ENCODE measurements at regions of chr7 and their contacts with region 1.

Region 1: DNA sequence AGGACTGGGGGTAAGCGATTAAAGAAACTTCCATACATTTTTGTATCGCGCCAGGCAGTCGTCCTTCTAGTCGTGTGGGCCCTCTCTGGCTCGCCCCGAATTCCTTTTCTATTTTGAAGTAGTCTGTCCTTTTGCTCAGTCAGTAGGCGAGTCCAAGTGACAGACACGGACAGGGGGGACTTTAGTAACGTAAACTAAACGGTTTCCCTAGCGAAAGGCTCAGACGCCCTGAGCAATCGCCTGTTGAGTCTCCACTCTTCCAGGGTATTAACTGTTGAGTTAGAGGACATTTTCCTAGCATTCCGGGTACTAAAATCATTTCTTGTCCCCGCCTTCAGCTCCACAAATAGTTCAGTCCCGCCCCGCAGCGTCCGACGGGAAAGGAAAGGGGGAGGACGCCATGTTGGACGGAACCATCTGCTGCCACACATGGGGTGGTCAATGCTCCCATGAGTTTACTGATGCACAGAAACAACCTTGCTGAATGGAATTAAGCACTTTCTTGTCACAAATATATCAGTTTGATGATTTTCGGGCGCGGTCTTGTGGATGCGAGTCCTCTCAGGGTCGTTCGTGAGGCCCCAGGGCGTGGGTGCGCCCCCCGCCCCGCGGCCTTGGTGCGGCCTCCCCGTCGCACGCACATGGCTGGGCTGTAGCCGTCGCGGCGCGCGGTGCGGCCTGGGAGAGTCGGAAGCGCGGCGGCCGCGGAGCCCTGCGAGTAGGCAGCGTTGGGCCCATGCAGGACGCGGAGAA is at the start of gene EIF3B:
- DNase-seq: peak; percentile 85
- H3K4me3 Mint-ChIP-seq: peak within 1 kb of the TSS; percentile 92
- H3K27ac Mint-ChIP-seq: peak within 1 kb of the TSS; percentile 100
- H3K4me1 Mint-ChIP-seq: peaks cover 21% of the 10 kb centered on the region
- H3K27me3 Mint-ChIP-seq: no peaks in the 10 kb centered on the region
- total RNA-seq, gene EIF3B: 269 and 270 TPM in 2 replicates

Region 2: DNA sequence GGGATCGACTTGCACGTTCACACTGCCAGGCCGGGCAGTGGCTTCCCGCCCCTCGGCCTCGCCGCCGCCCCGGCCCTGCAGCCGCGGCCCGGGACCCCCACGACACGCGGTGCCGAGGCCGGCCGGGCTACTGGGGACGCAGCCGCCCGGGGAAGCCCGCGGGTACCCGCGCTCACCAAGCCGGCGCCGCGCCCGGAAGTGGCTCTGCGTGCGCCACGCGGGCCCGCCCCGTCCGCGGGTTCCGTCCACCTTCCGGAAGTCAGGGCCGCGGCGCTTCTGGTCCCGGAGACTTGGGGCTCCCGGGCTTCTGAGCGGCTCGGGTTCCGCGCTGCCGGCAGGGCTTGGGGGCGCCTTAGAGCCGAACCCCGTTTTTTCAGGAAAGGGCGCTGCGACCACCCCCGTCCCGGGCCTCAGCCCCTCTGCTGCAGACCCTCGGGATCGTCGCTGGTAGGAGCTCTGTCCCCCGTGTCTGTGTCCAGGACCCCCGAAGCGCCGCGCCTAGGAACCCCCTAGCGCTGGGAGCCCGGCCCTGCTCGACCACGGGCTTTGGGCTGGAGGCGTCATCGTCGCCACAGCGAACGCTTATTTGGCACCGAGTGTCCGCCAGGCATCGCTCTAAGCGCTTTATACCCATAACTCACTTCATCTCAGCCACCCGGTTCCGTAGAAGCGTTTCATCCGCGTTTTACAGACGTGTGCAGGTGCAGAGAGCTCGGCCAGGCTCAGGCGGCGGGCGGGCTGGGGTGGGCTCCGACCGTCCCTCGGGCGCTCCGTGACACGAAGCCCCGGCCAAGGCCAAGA is 784.3 kb before region 1 on chr7 and contains the start of gene PSMG3:
- intact Hi-C with region 1: loop called (anchors 1 kb)
- DNase-seq: peak; percentile 86
- H3K4me3 Mint-ChIP-seq: peak within 1 kb of the TSS; percentile 89
- H3K27ac Mint-ChIP-seq: peak within 1 kb of the TSS; percentile 81
- H3K4me1 Mint-ChIP-seq: peaks cover 31% of the 10 kb centered on the region
- H3K27me3 Mint-ChIP-seq: no peaks in the 10 kb centered on the region
- total RNA-seq, gene PSMG3: 55.7 and 56.0 TPM in 2 replicates

Region 3: GRCh38 chr7:1940402-1940786 is 414.0 kb before region 1 on chr7:
- intact Hi-C with region 1: loop called (anchors 10 kb)
- DNase-seq: peak; percentile 90
- H3K4me3 Mint-ChIP-seq: peak overlapping the region; percentile 84
- H3K27ac Mint-ChIP-seq: peak overlapping the region; percentile 87
- H3K4me1 Mint-ChIP-seq: peaks cover 55% of the 10 kb centered on the region
- H3K27me3 Mint-ChIP-seq: peaks cover 2% of the 10 kb centered on the region

Region 4: DNA sequence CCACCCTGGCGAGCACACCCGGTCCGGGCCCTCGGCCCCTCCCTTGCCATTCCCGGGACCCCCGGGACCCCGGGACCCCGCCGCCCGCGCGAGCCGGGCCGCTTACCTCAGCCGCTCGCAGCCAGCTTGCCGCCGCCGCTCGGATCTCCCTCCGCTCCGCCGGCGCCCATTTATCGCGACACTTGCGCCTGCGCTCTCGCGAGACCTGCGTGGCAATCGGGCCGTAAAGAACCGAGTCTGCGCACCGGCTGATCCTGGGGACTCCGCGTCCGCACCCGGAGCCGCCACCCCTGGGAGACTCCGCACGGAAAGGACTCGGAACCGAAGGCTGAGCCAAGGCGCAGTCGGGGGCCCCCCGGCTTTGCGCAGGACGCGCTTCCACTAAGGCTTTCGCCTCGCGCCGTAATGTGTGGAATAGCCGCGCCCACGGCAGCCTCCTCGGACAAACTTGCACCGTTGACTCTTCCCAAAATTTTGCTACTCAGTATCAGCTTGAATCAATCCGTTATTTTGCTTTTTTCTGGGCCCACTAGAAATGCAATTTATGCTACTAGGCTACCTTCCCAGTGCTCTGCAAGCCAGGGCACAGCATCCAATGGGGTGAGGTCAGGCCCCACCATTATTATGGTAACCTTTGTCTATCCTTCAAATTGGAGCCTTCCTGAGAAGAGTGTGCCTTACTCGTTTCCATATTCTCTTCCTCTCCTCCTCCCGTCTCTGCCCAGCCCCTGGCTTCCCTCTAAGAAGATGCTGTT is 121.4 kb before region 1 on chr7 and contains the start of gene MAD1L1:
- intact Hi-C with region 1: loop called (anchors 1 kb)
- DNase-seq: peak; percentile 88
- H3K4me3 Mint-ChIP-seq: peak within 1 kb of the TSS; percentile 96
- H3K27ac Mint-ChIP-seq: peak within 1 kb of the TSS; percentile 83
- H3K4me1 Mint-ChIP-seq: peaks cover 26% of the 10 kb centered on the region
- H3K27me3 Mint-ChIP-seq: no peaks in the 10 kb centered on the region
- total RNA-seq, gene MAD1L1: 56.2 and 56.4 TPM in 2 replicates

Region 5: GRCh38 chr7:2529161-2530070 is 175.1 kb after region 1 on chr7:
- intact Hi-C with region 1: loop called (anchors 5 kb)
- DNase-seq: peak; percentile 60
- H3K4me3 Mint-ChIP-seq: peak overlapping the region; percentile 74
- H3K27ac Mint-ChIP-seq: peak overlapping the region; percentile 97
- H3K4me1 Mint-ChIP-seq: peaks cover 34% of the 10 kb centered on the region
- H3K27me3 Mint-ChIP-seq: no peaks in the 10 kb centered on the region